ENCODE measurements at regions of chr4 and their contacts with region 1.

Region 1: GRCh38 chr4:143549928-143550327 is 36.4 kb downstream of the SMARCA5 start:
- DNase-seq: no peak
- H3K4me3 Mint-ChIP-seq: no peak overlapping the region
- H3K27ac Mint-ChIP-seq: no peak overlapping the region
- H3K4me1 Mint-ChIP-seq: peaks cover 10% of the 10 kb centered on the region
- H3K27me3 Mint-ChIP-seq: no peaks in the 10 kb centered on the region

Region 2: DNA sequence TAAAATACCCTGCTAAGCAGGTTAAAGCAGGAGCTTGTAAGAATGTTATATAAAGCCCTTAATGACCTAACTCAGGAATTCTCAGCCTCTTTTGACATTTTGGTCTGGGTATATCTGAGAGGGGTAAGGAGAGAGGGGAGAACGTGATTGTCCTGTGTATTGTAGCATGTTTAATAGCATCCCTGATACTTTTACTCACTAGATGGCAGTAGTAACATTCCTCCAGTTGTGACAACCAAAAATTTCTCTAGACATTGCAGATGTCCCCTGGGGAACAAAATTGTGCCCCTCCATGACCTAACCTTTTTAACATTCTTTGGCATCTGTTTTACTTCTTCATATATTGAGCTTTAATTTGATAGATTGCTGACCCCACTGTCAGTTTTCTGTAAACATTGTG is 18.5 kb before region 1 on chr4:
- CTCF ChIA-PET with region 1: no interaction called
- intact Hi-C with region 1: loop called (anchors 2 kb)
- DNase-seq: no peak
- H3K4me3 Mint-ChIP-seq: no peak overlapping the region
- H3K27ac Mint-ChIP-seq: no peak overlapping the region
- H3K4me1 Mint-ChIP-seq: peaks cover 12% of the 10 kb centered on the region
- H3K27me3 Mint-ChIP-seq: no peaks in the 10 kb centered on the region

Measured in activated naive CD4-positive, alpha-beta T cell treated with anti-CD3 and anti-CD28 coated beads for 36 hours (primary cell).